ENCODE measurements at regions of chr7 and their contacts with region 1.

Region 1: GRCh38 chr7:143085109-143085508 is 33.0 kb downstream of the OR6V1 start:
- DNase-seq: no peak
- H3K4me3 ChIP-seq: no peak overlapping the region
- H3K27ac ChIP-seq: no peak overlapping the region
- H3K4me1 ChIP-seq: no peaks in the 10 kb centered on the region
- H3K27me3 ChIP-seq: no peaks in the 10 kb centered on the region
- CTCF ChIP-seq: no peak
- POLR2A ChIP-seq: no peak

Region 2: DNA sequence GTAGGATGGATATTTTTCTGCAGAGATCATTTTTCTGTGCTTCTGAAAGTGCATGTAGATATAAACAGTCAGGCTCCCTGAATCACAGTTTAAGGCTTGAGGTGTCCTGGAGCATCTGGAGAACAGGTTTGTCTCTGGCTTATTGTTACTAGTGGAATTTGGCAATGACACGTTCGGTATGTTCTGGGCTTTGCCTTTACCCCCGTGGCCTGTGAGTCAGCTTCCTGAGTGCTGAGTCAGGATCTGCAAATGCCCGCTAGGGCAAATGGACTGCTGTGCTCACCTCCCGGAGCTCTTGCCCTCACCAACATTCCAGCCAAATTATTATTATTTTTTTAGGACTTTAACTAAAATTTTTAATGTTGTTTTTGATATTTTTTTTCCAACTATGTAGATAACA is 528.4 kb before region 1 on chr7:
- intact Hi-C with region 1: no loop called
- DNase-seq: peak; percentile 20 to 76 (median 66)
- H3K4me3 ChIP-seq: no peak overlapping the region
- H3K27ac ChIP-seq: no peak overlapping the region
- H3K4me1 ChIP-seq: peaks cover 0 to 5% of the 10 kb centered on the region in 2 donors
- H3K27me3 ChIP-seq: no peaks in the 10 kb centered on the region
- CTCF ChIP-seq: peak in 2 of 6 experiments; percentile 23 to 28
- POLR2A ChIP-seq: no peak

Region 3: DNA sequence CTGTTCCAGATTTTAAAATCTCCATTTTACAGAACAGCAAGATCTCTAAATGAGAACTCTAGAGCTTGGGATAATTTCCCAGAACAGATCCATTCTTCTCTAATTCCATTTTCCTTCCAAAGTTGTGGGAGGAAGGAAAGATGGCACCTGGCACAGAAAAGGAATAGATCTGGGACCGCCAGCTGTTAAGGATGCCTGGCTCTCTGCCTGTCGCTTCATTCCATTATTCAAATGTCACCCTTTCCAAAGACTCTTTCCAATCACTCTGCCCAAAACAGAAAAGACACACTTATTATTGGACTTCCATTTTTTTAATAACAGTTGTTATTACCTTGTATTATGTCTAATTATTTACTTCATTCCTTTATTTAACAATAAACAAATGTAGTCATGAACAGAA is 57.4 kb before region 1 on chr7:
- intact Hi-C with region 1: loop called in 1 of 2 experiments (anchors 10 kb)
- DNase-seq: no peak
- H3K4me3 ChIP-seq: no peak overlapping the region
- H3K27ac ChIP-seq: no peak overlapping the region
- H3K4me1 ChIP-seq: no peaks in the 10 kb centered on the region
- H3K27me3 ChIP-seq: no peaks in the 10 kb centered on the region
- CTCF ChIP-seq: no peak
- POLR2A ChIP-seq: no peak